OCI-LY7 (cell line): ENCODE measurements at regions of chr7 and their contacts with region 1.

Region 1: GRCh38 chr7:101856473-101857357 is 39.3 kb downstream of the CUX1 start:
- DNase-seq: peak; percentile 92
- H3K4me3 ChIP-seq: peak overlapping the region; percentile 74
- H3K27ac ChIP-seq: peak overlapping the region; percentile 97
- H3K4me1 ChIP-seq: peaks cover 97% of the 10 kb centered on the region
- CTCF ChIP-seq: peak; percentile 73

Region 2: GRCh38 chr7:101602484-101603241 is 254.1 kb before region 1 on chr7:
- CTCF ChIA-PET with region 1: no interaction called
- POLR2A ChIA-PET with region 1: interaction called, 3 read pairs
- intact Hi-C with region 1: loop called (anchors 5 kb)
- DNase-seq: peak; percentile 85
- H3K4me3 ChIP-seq: no peak overlapping the region
- H3K27ac ChIP-seq: no peak overlapping the region
- H3K4me1 ChIP-seq: peaks cover 10% of the 10 kb centered on the region
- CTCF ChIP-seq: peak; percentile 98

Region 3: DNA sequence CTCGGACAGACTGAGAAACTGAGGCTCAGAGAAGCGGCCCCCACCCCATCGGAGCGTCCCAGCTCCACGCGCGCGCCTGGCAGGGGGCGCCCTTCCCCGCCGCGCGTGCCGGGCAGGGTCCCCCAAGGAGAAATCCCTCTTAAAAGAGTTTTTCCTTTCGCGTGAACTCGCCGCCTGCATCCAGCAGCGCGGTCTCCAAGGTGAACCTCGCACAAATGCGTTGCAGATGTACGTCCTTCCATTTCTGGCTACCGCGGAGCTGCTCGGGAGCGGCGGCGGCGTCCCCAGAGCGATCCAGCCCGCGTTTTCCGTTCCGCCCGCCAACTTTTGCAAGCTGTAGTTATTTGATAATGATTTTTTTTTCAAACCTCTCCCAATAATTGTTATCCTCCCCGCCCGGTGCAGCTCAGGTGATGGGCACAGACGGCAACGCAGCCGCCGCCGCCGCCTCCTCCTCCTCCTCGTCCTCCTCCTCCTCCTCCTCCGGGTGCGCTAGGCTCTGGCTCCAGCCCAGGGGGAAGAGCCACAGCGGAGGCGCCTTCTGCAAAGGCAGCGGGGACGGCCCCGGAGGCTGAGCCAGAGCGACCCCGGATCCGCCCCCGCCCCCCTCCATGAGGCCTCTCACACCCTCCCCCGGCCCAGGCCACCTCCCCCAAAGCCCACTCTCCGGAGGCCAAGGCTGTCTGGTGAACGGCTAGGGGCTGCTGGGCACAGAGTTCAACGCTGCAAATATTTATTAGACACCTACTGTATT is 113.3 kb before region 1 on chr7:
- CTCF ChIA-PET with region 1: interaction called, 3 read pairs
- POLR2A ChIA-PET with region 1: interaction called, 8 read pairs
- intact Hi-C with region 1: loop called (anchors 1 kb)
- DNase-seq: peak; percentile 84
- H3K4me3 ChIP-seq: peak overlapping the region; percentile 76
- H3K27ac ChIP-seq: peak overlapping the region; percentile 93
- H3K4me1 ChIP-seq: peaks cover 80% of the 10 kb centered on the region
- CTCF ChIP-seq: peak; percentile 83

Region 4: GRCh38 chr7:101870351-101871062 is 13.8 kb after region 1 on chr7:
- CTCF ChIA-PET with region 1: interaction called, 7 read pairs
- POLR2A ChIA-PET with region 1: interaction called, 65 read pairs
- intact Hi-C with region 1: loop called (anchors 2 kb)
- DNase-seq: peak; percentile 90
- H3K4me3 ChIP-seq: peak overlapping the region; percentile 57
- H3K27ac ChIP-seq: peak overlapping the region; percentile 97
- H3K4me1 ChIP-seq: peaks cover 100% of the 10 kb centered on the region
- CTCF ChIP-seq: peak; percentile 78

Region 5: GRCh38 chr7:101983147-101983811 is 126.6 kb after region 1 on chr7:
- CTCF ChIA-PET with region 1: interaction called, 3 read pairs
- POLR2A ChIA-PET with region 1: interaction called, 5 read pairs
- intact Hi-C with region 1: loop called (anchors 2 kb)
- DNase-seq: peak; percentile 61
- H3K4me3 ChIP-seq: peak overlapping the region; percentile 5
- H3K27ac ChIP-seq: peak overlapping the region; percentile 83
- H3K4me1 ChIP-seq: peaks cover 93% of the 10 kb centered on the region
- CTCF ChIP-seq: no peak